ENCODE measurements at regions of chr16 and their contacts with region 1.

Region 1: GRCh38 chr16:86016201-86016871 is 117.4 kb downstream of the IRF8 start:
- DNase-seq: peak; percentile 70
- ATAC-seq: peak; percentile 93
- H3K4me3 ChIP-seq: no peak overlapping the region
- H3K27ac ChIP-seq: no peak overlapping the region
- H3K4me1 ChIP-seq: no peaks in the 10 kb centered on the region
- H3K27me3 ChIP-seq: peaks cover 44% of the 10 kb centered on the region
- CTCF ChIP-seq: peak; percentile 90
- POLR2A ChIP-seq: no peak
- RAD21 ChIP-seq: peak; percentile 93

Region 2: DNA sequence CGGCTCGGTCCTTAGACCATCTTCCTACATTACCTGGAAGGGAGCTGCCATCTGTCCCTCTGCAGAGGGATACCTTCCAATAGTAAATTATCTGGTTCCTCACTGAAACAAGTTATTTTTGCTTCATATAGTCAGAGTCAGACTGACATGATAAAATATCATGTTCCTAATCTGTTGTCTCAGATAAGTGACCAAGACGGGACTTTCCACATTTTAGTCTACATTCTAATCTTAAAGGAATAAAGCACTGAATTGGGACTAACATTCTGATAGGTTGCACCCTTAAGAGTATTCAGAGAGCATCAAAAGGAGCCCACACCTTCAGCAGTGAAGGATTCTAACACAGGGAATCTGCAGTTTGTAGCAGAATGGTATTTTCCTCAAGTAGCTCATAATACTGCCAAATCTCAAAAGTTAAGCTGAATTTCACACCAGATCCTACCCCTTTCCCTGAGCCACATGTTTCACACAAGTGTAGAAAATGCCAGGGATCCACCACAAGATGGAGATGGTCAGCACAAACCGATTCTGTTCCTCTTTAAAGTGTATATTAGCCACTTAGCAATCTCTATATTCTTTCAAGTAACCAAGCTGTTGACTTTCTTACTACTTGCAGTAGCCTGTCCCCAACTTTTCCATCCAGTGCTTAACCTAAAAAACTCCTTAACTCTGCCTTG is 340.9 kb before region 1 on chr16:
- CTCF ChIA-PET with region 1: no interaction called
- POLR2A ChIA-PET with region 1: no interaction called
- dilution Hi-C with region 1: no loop called
- in situ Hi-C with region 1: no loop called
- intact Hi-C with region 1: loop called (anchors 2 kb)
- DNase-seq: peak; percentile 56
- ATAC-seq: peak; percentile 53
- H3K4me3 ChIP-seq: no peak overlapping the region
- H3K27ac ChIP-seq: no peak overlapping the region
- H3K4me1 ChIP-seq: peaks cover 11% of the 10 kb centered on the region
- H3K27me3 ChIP-seq: no peaks in the 10 kb centered on the region
- CTCF ChIP-seq: peak; percentile 57
- POLR2A ChIP-seq: no peak
- RAD21 ChIP-seq: peak; percentile 48

Region 3: GRCh38 chr16:85821441-85822135 is 194.7 kb before region 1 on chr16:
- CTCF ChIA-PET with region 1: interaction called, 19 read pairs
- POLR2A ChIA-PET with region 1: no interaction called
- dilution Hi-C with region 1: no loop called
- in situ Hi-C with region 1: loop called (anchors 5 kb)
- intact Hi-C with region 1: loop called (anchors 1 kb)
- DNase-seq: peak; percentile 76
- ATAC-seq: peak; percentile 91
- H3K4me3 ChIP-seq: no peak overlapping the region
- H3K27ac ChIP-seq: no peak overlapping the region
- H3K4me1 ChIP-seq: peaks cover 3% of the 10 kb centered on the region; the same call in 1 of the 2 replicates
- H3K27me3 ChIP-seq: peaks cover 28% of the 10 kb centered on the region
- CTCF ChIP-seq: peak; percentile 98
- POLR2A ChIP-seq: 0 out of 2 replicates have a peak, but pooled peaks have one; percentile 57
- RAD21 ChIP-seq: peak; percentile 99

Region 4: DNA sequence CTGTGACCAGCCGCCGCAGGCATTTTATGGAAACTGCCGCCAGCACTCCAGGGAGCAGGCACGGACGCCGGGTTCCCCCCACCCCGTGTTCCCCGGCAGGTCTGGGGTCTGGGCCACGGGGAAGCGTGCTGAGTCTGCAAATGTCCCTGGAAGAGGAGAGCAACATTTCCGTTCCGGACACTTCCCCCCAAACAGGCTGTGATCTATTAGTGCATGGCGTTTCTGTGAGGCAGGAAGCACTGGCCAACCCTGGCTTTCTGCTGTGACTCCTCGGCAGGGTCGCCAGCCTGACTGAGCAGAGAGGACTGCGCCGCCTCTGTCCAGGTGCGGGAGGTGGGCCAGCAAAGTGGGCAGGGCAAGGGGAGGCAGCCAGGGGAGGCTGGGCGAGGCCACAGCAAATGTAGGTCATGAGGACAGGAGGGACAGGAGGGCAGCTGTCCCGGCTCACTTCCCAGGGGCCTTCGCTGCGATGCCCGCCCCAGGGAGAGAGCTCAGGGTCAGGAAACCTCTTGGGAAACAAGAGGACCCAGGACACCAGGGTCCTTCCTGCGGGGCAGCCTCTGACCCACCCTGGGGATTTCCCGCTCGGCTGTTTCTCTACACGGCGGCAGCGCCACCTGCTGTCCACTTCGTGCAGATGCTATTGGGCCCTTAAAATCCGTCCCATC is 503.4 kb after region 1 on chr16:
- CTCF ChIA-PET with region 1: no interaction called
- POLR2A ChIA-PET with region 1: no interaction called
- dilution Hi-C with region 1: no loop called
- in situ Hi-C with region 1: no loop called
- intact Hi-C with region 1: loop called (anchors 5 kb)
- DNase-seq: peak; percentile 77
- ATAC-seq: peak; percentile 42
- H3K4me3 ChIP-seq: peak overlapping the region; percentile 13; the same call in 1 of the 2 replicates
- H3K27ac ChIP-seq: peak overlapping the region; percentile 30
- H3K4me1 ChIP-seq: peaks cover 14% of the 10 kb centered on the region
- H3K27me3 ChIP-seq: no peaks in the 10 kb centered on the region
- CTCF ChIP-seq: peak; percentile 87
- POLR2A ChIP-seq: peak; percentile 23; the same call in 1 of the 2 replicates
- RAD21 ChIP-seq: peak; percentile 77